ENCODE measurements at regions of chr16 and their contacts with region 1.

Region 1: DNA sequence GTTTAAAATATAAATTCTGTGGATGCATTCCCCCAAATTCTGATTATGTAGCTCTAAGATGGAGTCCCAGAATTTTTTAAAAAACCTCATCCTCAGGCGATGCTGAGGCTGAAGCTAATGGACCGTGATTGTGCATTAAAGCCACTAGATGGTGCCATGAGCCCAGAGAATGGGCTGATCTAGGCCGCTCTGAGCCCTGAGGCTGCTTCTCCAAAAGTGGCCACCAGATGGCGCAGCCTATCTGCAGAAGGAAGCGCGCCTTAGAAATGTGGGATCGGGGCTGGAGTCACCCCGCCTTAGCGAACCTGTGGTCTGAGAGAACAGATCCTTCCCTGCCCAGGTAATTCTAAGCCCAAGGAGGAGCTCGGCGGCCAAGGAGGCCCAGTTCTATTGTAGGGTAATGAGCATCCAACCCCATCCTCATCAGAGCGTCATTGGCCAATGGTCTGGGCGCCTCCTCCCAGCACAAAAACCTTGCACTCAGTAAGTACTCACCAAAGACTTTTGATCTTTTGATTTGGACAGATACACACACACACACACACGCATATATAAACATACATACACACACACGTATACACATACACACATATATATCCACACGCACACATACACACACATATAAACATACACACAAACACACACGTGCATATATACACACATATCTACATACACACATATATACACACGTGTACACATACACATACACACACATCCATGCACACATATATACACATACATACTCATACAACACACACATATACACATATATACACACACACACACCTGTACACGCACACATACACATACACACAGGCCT is 13.7 kb upstream of the MMP2 start:
- DNase-seq: peak; percentile 83
- H3K4me3 ChIP-seq: no peak overlapping the region
- H3K27ac ChIP-seq: no peak overlapping the region
- H3K4me1 ChIP-seq: peaks cover under 1% of the 10 kb centered on the region
- H3K27me3 ChIP-seq: peaks cover 0 to 6% of the 10 kb centered on the region in 2 experiments
- CTCF ChIP-seq: peak; percentile 98 to 99
- POLR2A ChIP-seq: no peak

Region 2: GRCh38 chr16:53549970-53550690 is 1915.2 kb before region 1 on chr16:
- CTCF ChIA-PET with region 1: interaction called, 14 read pairs
- POLR2A ChIA-PET with region 1: no interaction called
- dilution Hi-C with region 1: no loop called
- intact Hi-C with region 1: loop called (anchors 10 kb)
- DNase-seq: peak; percentile 83
- H3K4me3 ChIP-seq: no peak overlapping the region
- H3K27ac ChIP-seq: no peak overlapping the region
- H3K4me1 ChIP-seq: peaks cover 3% of the 10 kb centered on the region
- H3K27me3 ChIP-seq: peaks cover 5 to 6% of the 10 kb centered on the region in 2 experiments
- CTCF ChIP-seq: peak; percentile 69 to 88
- POLR2A ChIP-seq: no peak

Region 3: GRCh38 chr16:55494994-55495421 is 29.7 kb after region 1 on chr16:
- CTCF ChIA-PET with region 1: interaction called, 34 read pairs
- POLR2A ChIA-PET with region 1: no interaction called
- dilution Hi-C with region 1: no loop called
- intact Hi-C with region 1: loop called (anchors 1 kb)
- DNase-seq: peak; percentile 85
- H3K4me3 ChIP-seq: no peak overlapping the region
- H3K27ac ChIP-seq: peak overlapping the region; percentile 2
- H3K4me1 ChIP-seq: peaks cover 52% of the 10 kb centered on the region
- H3K27me3 ChIP-seq: no peaks in the 10 kb centered on the region
- CTCF ChIP-seq: peak; percentile 20 to 33
- POLR2A ChIP-seq: no peak

Region 4: DNA sequence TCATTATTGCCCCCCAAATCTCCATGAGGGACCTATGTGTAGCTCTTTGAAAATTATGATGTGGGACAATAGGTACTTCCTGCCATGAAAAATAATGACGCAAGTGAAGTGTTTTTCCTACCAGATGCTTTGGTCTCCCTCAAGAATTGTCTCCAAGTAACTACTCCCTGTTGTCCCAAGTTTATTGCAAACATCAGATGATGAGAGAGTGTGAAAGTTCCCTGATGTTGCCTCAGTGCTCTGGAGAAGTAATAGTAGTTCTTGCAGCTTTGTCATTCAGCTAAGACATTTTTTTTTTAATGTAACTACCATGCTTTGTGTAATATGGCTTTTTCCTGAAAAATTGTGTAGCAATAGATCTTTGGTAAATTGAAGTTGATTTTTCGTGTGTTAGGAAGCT is 63.7 kb after region 1 on chr16:
- CTCF ChIA-PET with region 1: interaction called, 11 read pairs
- POLR2A ChIA-PET with region 1: no interaction called
- dilution Hi-C with region 1: no loop called
- intact Hi-C with region 1: no loop called
- DNase-seq: peak; percentile 62
- H3K4me3 ChIP-seq: no peak overlapping the region
- H3K27ac ChIP-seq: peak overlapping the region; percentile 63
- H3K4me1 ChIP-seq: peaks cover 38% of the 10 kb centered on the region
- H3K27me3 ChIP-seq: no peaks in the 10 kb centered on the region
- CTCF ChIP-seq: no peak
- POLR2A ChIP-seq: no peak

Region 5: GRCh38 chr16:55643161-55643970 is 178.1 kb after region 1 on chr16:
- CTCF ChIA-PET with region 1: interaction called, 27 read pairs
- POLR2A ChIA-PET with region 1: no interaction called
- dilution Hi-C with region 1: no loop called
- intact Hi-C with region 1: loop called (anchors 1 kb)
- DNase-seq: peak; percentile 33
- H3K4me3 ChIP-seq: no peak overlapping the region
- H3K27ac ChIP-seq: no peak overlapping the region
- H3K4me1 ChIP-seq: no peaks in the 10 kb centered on the region
- H3K27me3 ChIP-seq: peaks cover 5 to 9% of the 10 kb centered on the region in 2 experiments
- CTCF ChIP-seq: peak; percentile 11 to 58
- POLR2A ChIP-seq: no peak

Region 6: DNA sequence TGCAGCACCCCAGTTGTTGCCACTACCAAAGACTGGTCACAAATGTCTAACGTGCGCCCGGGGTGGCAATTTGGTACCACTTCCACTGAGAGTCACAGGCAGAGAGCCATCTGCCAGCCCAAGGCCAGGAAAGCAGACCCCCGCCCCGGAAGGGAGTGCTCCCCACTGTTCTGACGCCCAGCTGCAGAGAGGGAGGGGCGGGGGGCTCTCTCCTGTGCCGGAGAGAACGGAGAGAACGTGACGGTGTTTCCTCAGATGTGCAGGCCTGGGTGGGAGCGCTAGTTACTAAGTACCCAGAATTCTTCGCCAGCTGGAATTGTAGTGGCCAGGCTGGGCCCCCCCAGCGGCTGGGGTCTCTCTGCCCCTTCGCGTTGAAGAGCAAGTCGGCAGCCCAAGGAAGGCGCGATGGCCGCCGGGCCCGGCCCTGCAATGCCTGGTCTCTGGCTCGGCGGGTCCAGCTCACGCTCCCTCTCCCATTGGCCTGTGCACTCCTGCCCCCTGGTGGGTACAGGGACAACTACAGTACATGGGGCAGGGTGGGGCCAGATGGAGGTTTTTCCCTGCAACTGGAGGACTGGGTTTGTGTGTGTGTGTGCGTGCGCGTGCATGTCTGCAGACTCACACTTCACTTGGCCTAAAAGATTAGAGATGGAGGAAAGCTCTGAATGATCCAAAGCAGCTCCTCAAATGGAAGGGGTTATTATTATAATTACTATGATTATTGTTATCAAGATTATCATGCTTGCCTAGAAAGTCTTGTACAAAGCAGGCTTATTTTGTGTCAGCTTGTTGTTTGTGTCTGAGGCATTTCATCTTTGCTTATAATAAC is 852.9 kb after region 1 on chr16:
- CTCF ChIA-PET with region 1: interaction called, 16 read pairs
- POLR2A ChIA-PET with region 1: no interaction called
- dilution Hi-C with region 1: no loop called
- intact Hi-C with region 1: loop called (anchors 1 kb)
- DNase-seq: peak; percentile 71
- H3K4me3 ChIP-seq: peak overlapping the region in 1 of 3 experiments; percentile 10
- H3K27ac ChIP-seq: no peak overlapping the region
- H3K4me1 ChIP-seq: no peaks in the 10 kb centered on the region
- H3K27me3 ChIP-seq: peaks cover 4 to 6% of the 10 kb centered on the region in 2 experiments
- CTCF ChIP-seq: peak; percentile 89 to 94
- POLR2A ChIP-seq: no peak